ENCODE measurements at regions of chr2 and their contacts with region 1.

Region 1: DNA sequence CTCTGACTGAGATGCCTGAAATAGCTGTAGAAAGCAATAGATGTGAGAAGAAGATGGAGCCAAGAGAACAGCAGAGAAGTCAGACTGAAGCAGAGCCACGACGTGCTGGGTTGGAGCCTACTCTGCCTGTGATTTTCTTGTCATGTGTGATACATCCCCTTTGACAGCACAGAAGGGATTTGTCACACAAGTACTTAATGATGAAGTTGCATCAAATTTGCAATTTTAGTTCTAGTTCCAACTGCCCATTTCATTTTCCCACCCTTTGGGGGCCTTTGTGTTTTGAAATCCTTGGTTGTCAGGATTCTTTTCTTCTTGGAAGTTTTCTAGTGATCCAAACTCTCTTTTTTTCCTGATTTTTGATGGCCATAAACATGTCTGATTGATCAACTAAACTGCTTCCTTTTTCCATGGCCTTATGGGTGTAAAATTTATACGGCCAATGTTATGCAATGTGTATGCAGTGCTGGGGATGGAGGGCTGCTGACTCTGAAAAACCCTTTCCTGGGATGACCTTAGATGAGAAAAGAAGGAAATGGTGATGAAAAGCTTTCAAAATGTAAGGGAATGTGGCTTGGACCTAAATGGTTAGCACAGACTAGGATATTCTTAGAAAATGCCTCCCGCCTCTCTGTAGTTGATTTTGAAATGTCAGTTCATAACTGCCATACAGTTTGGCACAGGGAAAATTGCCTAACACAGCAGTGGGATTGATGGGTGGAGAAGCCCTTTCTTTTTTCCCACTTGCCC is 9.6 kb upstream of the B3GNT2 start:
- DNase-seq: no peak
- H3K4me3 ChIP-seq: no peak overlapping the region
- H3K27ac ChIP-seq: no peak overlapping the region
- H3K4me1 ChIP-seq: no peaks in the 10 kb centered on the region
- H3K27me3 ChIP-seq: no peaks in the 10 kb centered on the region
- CTCF ChIP-seq: no peak
- POLR2A ChIP-seq: no peak

Region 2: DNA sequence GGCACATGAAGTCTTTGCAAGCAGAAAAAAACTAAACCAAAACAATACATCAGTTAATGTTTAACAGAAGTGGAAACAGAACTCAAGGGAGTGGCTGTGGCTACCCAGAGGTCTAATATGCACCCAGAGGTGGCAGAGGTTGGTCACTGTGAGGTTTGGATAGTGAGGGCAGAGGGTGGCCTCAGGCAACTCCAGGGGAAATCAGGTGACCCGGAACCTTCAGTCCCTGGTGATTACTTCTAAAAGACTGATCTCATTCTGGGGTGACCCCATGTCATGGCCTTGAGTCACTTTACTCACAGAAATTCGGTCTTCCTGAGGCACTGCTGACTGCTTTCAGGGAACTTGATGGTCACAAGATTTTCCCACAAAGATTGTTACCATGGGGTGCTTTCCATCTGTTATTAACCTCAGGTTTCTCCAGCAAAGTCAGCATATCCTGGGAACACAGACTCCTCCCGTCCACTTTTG is 220.3 kb after region 1 on chr2:
- intact Hi-C with region 1: loop called (anchors 10 kb)
- DNase-seq: no peak
- H3K4me3 ChIP-seq: no peak overlapping the region
- H3K27ac ChIP-seq: no peak overlapping the region
- H3K4me1 ChIP-seq: peaks cover 18 to 40% (median 21%) of the 10 kb centered on the region in 3 donors
- H3K27me3 ChIP-seq: no peaks in the 10 kb centered on the region
- CTCF ChIP-seq: no peak
- POLR2A ChIP-seq: no peak